Endothelial cell of umbilical vein (primary cell): ENCODE measurements at regions of chr1 and their contacts with region 1.

Region 1: GRCh38 chr1:206912445-206913095 is 9.2 kb downstream of the FCMR start:
- DNase-seq: peak; percentile 75
- H3K4me3 ChIP-seq: no peak overlapping the region
- H3K27ac ChIP-seq: no peak overlapping the region
- H3K4me1 ChIP-seq: no peaks in the 10 kb centered on the region
- H3K27me3 ChIP-seq: peaks cover 35 to 36% of the 10 kb centered on the region in 2 experiments
- CTCF ChIP-seq: peak; percentile 71 to 82
- POLR2A ChIP-seq: no peak

Region 2: GRCh38 chr1:206600527-206600926 is 312.0 kb before region 1 on chr1:
- CTCF ChIA-PET with region 1: no interaction called
- POLR2A ChIA-PET with region 1: no interaction called
- dilution Hi-C with region 1: no loop called
- intact Hi-C with region 1: no loop called
- DNase-seq: no peak
- H3K4me3 ChIP-seq: no peak overlapping the region
- H3K27ac ChIP-seq: no peak overlapping the region
- H3K4me1 ChIP-seq: no peaks in the 10 kb centered on the region
- H3K27me3 ChIP-seq: no peaks in the 10 kb centered on the region
- CTCF ChIP-seq: no peak
- POLR2A ChIP-seq: no peak

Region 3: DNA sequence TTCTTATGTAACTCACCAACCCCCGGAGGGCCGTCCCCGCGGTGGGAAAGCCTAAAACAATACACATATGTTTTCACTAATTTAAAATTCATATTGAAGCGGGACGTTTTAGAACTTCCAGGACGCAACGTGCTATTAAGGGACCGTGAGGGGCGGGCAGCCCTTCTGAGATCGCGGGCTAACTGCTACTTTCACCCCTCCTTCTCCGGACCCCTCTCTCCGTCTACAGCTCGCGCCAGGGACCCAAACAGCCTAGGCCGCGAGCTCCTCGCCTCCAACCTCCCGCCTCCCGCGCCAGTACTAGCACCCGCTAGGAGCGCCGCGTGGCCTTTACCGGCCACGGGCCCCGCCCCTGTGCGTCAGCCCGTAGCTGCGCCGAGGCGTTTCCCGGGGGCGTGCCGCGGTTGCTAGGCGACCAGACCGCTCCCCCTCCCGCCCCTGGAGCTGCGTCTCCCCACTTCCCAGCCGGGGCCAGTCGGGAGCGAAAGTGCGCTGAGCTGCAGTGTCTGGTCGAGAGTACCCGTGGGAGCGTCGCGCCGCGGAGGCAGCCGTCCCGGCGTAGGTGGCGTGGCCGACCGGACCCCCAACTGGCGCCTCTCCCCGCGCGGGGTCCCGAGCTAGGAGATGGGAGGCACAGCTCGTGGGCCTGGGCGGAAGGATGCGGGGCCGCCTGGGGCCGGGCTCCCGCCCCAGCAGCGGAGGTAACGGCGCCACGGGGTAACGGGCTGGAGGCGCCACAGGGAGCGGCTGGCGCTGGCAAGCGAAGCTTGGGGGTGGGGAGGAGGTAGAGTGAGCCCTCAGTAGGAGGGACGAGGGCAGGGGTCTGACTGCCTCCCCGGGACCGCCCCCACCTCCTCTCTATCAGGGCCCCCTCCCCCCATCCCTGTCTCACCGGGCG is 277.2 kb before region 1 on chr1 and contains the start of gene DYRK3:
- CTCF ChIA-PET with region 1: interaction called, 33 read pairs
- POLR2A ChIA-PET with region 1: no interaction called
- dilution Hi-C with region 1: no loop called
- intact Hi-C with region 1: loop called (anchors 1 kb)
- DNase-seq: peak; percentile 93
- H3K4me3 ChIP-seq: peak within 1 kb of the TSS; percentile 72 to 90 (median 80)
- H3K27ac ChIP-seq: peak within 1 kb of the TSS; percentile 59
- H3K4me1 ChIP-seq: peaks cover 13% of the 10 kb centered on the region
- H3K27me3 ChIP-seq: no peaks in the 10 kb centered on the region
- CTCF ChIP-seq: peak in 1 of 2 donors; percentile 28
- POLR2A ChIP-seq: peak; percentile 88
- total RNA-seq, gene DYRK3: 7.4 and 10.9 TPM in 2 replicates

Region 4: DNA sequence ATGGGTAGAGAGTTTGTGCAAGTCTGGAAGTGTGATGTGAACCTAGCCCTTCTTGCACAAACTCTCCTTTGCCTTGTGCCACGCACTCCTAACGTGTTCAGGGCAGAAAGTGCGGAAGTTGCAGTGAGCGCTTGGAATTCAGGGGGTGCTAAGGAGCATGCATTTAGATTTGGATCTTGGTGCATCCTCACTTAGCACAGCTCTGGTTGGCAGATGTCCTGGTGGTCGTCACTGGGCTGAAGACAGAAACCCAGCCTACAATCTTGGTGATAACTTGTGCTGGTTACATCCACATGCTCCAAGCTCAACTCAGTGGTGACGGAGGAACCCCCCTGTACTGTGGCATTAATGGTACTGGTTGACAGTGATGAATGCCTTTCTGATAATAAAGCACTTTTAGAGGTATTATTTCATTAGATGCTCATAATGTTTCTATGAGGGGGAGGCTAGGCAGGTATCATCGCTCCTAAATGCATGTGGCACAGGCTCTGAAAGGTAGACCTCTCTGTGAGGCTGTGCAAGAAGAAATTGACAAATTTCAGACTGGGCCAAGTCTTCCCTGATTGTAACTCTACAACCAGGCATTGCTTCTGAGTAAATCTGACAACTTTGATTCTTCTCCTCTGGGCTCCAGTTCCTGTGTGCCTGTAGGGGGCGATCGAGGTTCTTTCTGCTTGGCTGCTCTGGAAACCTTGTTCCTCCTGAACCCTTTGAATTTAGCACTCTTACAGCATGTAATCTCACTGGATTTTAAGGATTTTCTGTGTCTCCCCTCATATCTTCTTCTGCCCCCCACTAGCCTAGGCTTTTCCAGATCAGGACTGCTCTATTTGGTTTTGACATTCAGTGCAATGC is 187.2 kb before region 1 on chr1:
- CTCF ChIA-PET with region 1: interaction called, 21 read pairs
- POLR2A ChIA-PET with region 1: no interaction called
- dilution Hi-C with region 1: no loop called
- intact Hi-C with region 1: loop called (anchors 1 kb)
- DNase-seq: peak; percentile 31
- H3K4me3 ChIP-seq: no peak overlapping the region
- H3K27ac ChIP-seq: no peak overlapping the region
- H3K4me1 ChIP-seq: no peaks in the 10 kb centered on the region
- H3K27me3 ChIP-seq: no peaks in the 10 kb centered on the region
- CTCF ChIP-seq: peak; percentile 64 to 71
- POLR2A ChIP-seq: no peak

Region 5: GRCh38 chr1:206808615-206809014 is 104.0 kb before region 1 on chr1:
- CTCF ChIA-PET with region 1: interaction called, 64 read pairs
- POLR2A ChIA-PET with region 1: no interaction called
- dilution Hi-C with region 1: no loop called
- intact Hi-C with region 1: loop called (anchors 1 kb)
- DNase-seq: no peak
- H3K4me3 ChIP-seq: no peak overlapping the region
- H3K27ac ChIP-seq: no peak overlapping the region
- H3K4me1 ChIP-seq: no peaks in the 10 kb centered on the region
- H3K27me3 ChIP-seq: peaks cover 3 to 13% of the 10 kb centered on the region in 2 experiments
- CTCF ChIP-seq: peak in 1 of 2 donors; percentile 21
- POLR2A ChIP-seq: no peak

Region 6: GRCh38 chr1:206952171-206952570 is 39.6 kb after region 1 on chr1:
- CTCF ChIA-PET with region 1: no interaction called
- POLR2A ChIA-PET with region 1: no interaction called
- dilution Hi-C with region 1: no loop called
- intact Hi-C with region 1: no loop called
- DNase-seq: no peak
- H3K4me3 ChIP-seq: no peak overlapping the region
- H3K27ac ChIP-seq: no peak overlapping the region
- H3K4me1 ChIP-seq: no peaks in the 10 kb centered on the region
- H3K27me3 ChIP-seq: peaks cover 2 to 3% of the 10 kb centered on the region in 2 experiments
- CTCF ChIP-seq: no peak
- POLR2A ChIP-seq: no peak

Region 7: DNA sequence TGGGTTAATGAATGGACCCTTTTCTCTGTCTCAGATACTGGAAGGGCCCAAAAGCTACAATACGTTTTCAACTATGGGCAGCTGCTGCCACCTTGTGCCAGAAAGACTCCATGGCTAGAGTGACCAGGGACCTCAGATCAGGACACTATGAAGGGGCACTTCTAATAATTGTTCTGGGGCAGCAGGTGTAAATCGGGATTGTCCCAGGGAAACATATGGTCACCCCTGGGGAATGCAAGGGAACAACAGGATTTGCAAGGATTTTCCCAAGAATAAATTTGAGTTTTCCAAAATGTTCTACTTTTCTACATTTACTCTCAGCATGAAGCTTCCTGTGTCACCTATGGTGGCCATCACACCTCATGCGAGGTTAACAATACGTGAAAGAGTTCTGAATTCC is 69.6 kb after region 1 on chr1:
- CTCF ChIA-PET with region 1: interaction called, 16 read pairs
- POLR2A ChIA-PET with region 1: no interaction called
- dilution Hi-C with region 1: no loop called
- intact Hi-C with region 1: no loop called
- DNase-seq: peak; percentile 27
- H3K4me3 ChIP-seq: no peak overlapping the region
- H3K27ac ChIP-seq: no peak overlapping the region
- H3K4me1 ChIP-seq: no peaks in the 10 kb centered on the region
- H3K27me3 ChIP-seq: peaks cover 6 to 12% of the 10 kb centered on the region in 2 experiments
- CTCF ChIP-seq: peak; percentile 27 to 44
- POLR2A ChIP-seq: no peak

Region 8: GRCh38 chr1:207205614-207206061 is 293.1 kb after region 1 on chr1:
- CTCF ChIA-PET with region 1: no interaction called
- POLR2A ChIA-PET with region 1: no interaction called
- dilution Hi-C with region 1: no loop called
- intact Hi-C with region 1: no loop called
- DNase-seq: peak; percentile 80
- H3K4me3 ChIP-seq: peak overlapping the region in 1 of 3 experiments; percentile 40
- H3K27ac ChIP-seq: peak overlapping the region; percentile 77
- H3K4me1 ChIP-seq: peaks cover 16% of the 10 kb centered on the region
- H3K27me3 ChIP-seq: no peaks in the 10 kb centered on the region
- CTCF ChIP-seq: no peak
- POLR2A ChIP-seq: no peak